AG04450 (cell line): ENCODE measurements at regions of chr3 and their contacts with region 1.

Region 1: DNA sequence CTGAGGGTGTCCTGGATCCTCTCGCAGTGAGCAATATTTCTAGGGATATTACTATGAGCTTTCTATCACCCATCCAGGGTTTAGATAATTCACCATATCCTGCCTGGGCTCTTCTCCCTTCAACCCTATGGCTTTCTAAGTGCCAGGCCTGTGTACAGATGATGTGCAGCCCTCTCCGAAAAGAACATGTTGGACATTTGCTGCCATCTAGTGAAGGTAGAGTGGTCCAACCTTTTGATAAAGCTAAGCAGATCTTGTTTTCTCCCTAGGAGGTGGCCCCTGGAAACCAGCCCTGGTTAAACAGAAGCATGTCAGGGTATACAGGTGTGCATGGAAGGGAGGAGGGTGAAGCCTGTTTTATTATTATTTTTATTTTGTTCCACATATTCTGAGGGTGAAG is 27.9 kb upstream of the SCN10A start:
- DNase-seq: peak; percentile 29
- H3K4me3 ChIP-seq: no peak overlapping the region
- H3K27ac ChIP-seq: no peak overlapping the region
- H3K27me3 ChIP-seq: peaks cover 5% of the 10 kb centered on the region
- CTCF ChIP-seq: peak; percentile 70

Region 2: GRCh38 chr3:38651154-38651789 is 192.6 kb before region 1 on chr3:
- CTCF ChIA-PET with region 1: interaction called, 38 read pairs
- POLR2A ChIA-PET with region 1: no interaction called
- DNase-seq: peak; percentile 18
- H3K4me3 ChIP-seq: no peak overlapping the region
- H3K27ac ChIP-seq: no peak overlapping the region
- H3K27me3 ChIP-seq: peaks cover 30% of the 10 kb centered on the region
- CTCF ChIP-seq: peak; percentile 98

Region 3: DNA sequence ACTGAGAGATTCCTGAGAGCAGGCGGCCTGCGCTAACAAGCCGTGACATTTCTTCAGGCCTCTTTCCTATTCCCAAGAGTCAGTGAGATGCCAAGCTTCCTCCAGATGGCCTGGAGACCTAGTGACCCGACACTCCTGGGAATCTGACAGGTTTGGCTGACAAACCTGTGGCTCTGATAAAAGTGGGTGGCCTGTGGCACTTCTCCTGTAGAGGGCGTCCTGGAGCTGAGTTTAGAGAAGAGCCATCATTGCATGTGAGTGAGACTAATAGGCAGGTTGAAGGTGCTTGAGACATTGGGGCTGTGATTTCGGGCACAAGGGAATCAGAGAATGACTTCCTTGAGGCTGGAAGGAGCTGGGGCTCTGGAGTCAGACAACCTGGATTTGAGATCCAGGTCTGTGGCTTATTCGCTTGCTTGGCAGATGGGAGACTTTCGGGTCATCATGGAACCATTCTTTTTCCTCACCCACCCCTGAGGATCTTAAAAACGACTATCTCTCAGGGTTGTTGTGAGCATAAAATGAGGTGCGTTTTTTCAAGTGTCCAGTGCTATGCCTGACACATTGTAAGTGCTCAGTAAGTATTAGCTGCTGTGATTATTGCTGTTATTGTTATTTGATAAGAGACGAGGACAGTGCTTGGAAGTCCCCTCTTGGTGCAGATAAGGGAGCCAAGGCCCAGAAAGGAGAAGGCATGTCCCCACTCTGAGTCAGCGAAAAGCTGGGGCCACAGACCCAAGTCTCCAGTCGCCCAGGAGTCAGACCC is 105.1 kb before region 1 on chr3:
- CTCF ChIA-PET with region 1: interaction called, 15 read pairs
- POLR2A ChIA-PET with region 1: no interaction called
- DNase-seq: no peak
- H3K4me3 ChIP-seq: no peak overlapping the region
- H3K27ac ChIP-seq: no peak overlapping the region
- H3K27me3 ChIP-seq: peaks cover 2% of the 10 kb centered on the region
- CTCF ChIP-seq: peak; percentile 66

Region 4: GRCh38 chr3:38805765-38806386 is 38.0 kb before region 1 on chr3:
- CTCF ChIA-PET with region 1: interaction called, 14 read pairs
- POLR2A ChIA-PET with region 1: no interaction called
- DNase-seq: peak; percentile 46
- H3K4me3 ChIP-seq: no peak overlapping the region
- H3K27ac ChIP-seq: no peak overlapping the region
- H3K27me3 ChIP-seq: peaks cover 5% of the 10 kb centered on the region
- CTCF ChIP-seq: no peak

Region 5: DNA sequence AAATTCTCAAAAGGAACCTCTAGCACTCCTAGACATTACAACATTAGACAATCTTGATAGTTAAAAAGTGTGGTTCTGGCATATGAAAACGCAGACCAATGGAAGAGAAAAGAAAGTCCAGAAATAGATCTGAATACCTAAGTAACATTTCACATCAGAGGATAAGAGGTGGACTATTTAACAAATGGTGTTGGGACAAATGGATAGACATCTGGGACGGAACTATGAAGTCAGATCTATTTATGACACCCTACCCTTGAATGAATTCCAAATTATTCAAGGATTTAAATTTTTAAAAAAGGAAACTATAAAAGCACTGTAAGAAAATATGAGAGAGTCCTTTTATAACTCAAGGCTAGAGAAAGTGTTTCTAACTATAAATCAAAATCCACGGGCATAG is 96.5 kb after region 1 on chr3:
- CTCF ChIA-PET with region 1: no interaction called
- POLR2A ChIA-PET with region 1: no interaction called
- DNase-seq: no peak
- H3K4me3 ChIP-seq: no peak overlapping the region
- H3K27ac ChIP-seq: no peak overlapping the region
- H3K27me3 ChIP-seq: no peaks in the 10 kb centered on the region
- CTCF ChIP-seq: no peak

Region 6: DNA sequence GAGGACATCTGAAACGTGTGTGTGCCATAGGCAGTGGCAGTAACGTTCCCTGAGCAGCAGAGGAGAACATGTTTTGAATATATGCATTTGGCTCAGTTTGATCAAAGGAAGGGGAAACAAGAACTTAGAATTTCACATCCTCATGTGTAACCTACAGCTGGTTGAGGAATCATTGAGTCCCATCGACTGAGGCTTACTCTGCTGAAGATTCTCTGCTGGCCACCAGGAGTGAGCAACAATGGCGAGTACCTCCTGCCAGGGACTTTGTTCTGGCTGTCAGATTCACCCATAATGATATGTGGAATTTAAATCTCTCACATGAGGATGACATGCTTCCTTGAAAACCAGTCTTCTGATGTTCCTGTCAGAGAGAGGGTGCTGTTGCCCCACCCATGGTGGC is 242.2 kb after region 1 on chr3:
- CTCF ChIA-PET with region 1: no interaction called
- POLR2A ChIA-PET with region 1: no interaction called
- DNase-seq: no peak
- H3K4me3 ChIP-seq: no peak overlapping the region
- H3K27ac ChIP-seq: no peak overlapping the region
- H3K27me3 ChIP-seq: no peaks in the 10 kb centered on the region
- CTCF ChIP-seq: no peak

Region 7: GRCh38 chr3:39196671-39197356 is 352.9 kb after region 1 on chr3:
- CTCF ChIA-PET with region 1: no interaction called
- POLR2A ChIA-PET with region 1: no interaction called
- DNase-seq: no peak
- H3K4me3 ChIP-seq: no peak overlapping the region
- H3K27ac ChIP-seq: no peak overlapping the region
- H3K27me3 ChIP-seq: peaks cover 12% of the 10 kb centered on the region
- CTCF ChIP-seq: no peak